Activated naive CD4-positive, alpha-beta T cell treated with anti-CD3 and anti-CD28 coated beads for 36 hours (primary cell): ENCODE measurements at regions of chr1 and their contacts with region 1.

Region 1: DNA sequence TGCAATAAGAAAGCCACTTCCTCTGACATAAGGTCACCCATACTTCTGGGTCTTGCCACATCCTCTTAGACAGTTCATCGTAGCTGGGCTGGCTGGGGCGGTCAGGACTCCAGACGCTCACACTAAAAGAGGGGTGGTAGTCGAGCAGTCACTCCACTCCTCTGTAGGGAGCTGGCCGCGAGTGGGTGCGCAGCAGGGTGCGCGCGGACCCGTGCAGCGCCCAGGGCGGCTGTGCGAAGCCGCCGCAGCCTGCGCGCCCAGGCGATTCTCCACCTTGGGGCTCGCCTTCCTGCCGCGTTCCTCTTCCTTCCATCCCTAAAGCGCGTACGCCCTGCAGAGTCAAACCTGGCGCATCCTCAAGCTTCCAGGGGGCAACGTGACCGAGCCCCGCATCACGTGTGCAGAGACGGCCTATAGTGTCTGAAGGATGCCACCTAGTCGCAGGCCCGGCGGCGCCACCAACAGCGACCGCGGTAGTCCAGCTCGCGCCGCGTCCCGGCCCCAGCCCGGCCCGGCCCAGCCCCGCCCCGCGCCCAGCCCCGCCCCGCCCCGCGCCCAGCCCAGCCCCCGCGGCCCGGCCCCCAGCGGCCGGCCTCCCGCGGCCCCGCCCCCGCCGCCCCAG is 360 bp upstream of the PRDX6 start:
- DNase-seq: peak; percentile 86
- H3K4me3 Mint-ChIP-seq: peak overlapping the region; percentile 91
- H3K27ac Mint-ChIP-seq: peak overlapping the region; percentile 93
- H3K4me1 Mint-ChIP-seq: peaks cover 58% of the 10 kb centered on the region
- H3K27me3 Mint-ChIP-seq: no peaks in the 10 kb centered on the region

Region 2: DNA sequence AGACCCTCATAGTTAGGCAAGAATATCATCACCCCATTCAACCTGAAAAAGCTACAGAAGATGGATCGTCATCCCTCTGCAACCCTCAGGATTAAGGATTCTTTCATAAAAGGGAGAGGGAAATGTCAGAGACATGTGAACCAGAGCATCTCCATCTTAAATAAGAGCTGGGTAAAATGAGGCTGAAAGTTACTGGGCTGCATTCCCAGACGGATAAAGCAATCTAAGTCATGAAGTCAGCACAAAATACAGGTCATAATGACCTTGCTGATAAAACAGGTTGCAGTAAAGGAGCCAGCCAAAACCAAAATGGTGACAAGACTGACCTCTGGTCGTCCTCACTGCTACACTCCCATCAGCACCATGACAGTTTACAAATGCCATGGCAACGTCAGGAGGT is 23.0 kb after region 1 on chr1:
- CTCF ChIA-PET with region 1: no interaction called
- intact Hi-C with region 1: no loop called
- DNase-seq: no peak
- H3K4me3 Mint-ChIP-seq: no peak overlapping the region
- H3K27ac Mint-ChIP-seq: no peak overlapping the region
- H3K4me1 Mint-ChIP-seq: no peaks in the 10 kb centered on the region
- H3K27me3 Mint-ChIP-seq: no peaks in the 10 kb centered on the region

Region 3: DNA sequence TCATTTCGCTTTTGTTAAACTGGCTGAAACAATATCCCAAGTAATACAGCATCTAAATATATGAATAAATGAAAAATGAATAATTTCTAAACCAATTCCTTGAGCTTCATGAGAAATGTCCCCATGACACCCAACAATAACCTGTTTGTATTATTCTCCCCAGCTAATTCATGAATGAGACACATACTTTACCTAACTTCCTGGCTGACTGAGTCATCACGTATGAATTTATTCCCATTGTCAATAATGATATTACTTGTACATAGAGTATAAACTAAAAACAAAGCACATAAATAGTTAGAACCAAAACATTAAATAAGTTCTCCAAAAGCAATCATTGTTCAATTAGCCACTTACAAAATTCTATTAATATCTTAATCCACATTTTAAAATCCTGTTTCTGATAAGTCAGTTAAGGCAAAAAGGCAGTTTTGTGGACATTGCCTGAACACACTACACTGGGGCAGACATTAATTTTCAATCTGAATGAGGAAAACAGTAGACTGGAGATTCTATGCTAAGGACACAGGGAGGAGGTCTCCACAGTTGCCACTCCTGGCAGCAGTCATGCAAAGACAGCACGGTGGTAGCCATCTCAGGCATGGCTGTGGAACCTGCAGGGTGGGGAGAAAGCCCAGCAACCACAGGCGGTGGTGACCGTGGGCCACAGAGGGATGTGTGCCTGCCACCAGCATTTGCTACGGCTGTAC is 77.9 kb after region 1 on chr1:
- CTCF ChIA-PET with region 1: no interaction called
- intact Hi-C with region 1: loop called (anchors 5 kb)
- DNase-seq: no peak
- H3K4me3 Mint-ChIP-seq: no peak overlapping the region
- H3K27ac Mint-ChIP-seq: no peak overlapping the region
- H3K4me1 Mint-ChIP-seq: peaks cover 47% of the 10 kb centered on the region
- H3K27me3 Mint-ChIP-seq: no peaks in the 10 kb centered on the region

Region 4: DNA sequence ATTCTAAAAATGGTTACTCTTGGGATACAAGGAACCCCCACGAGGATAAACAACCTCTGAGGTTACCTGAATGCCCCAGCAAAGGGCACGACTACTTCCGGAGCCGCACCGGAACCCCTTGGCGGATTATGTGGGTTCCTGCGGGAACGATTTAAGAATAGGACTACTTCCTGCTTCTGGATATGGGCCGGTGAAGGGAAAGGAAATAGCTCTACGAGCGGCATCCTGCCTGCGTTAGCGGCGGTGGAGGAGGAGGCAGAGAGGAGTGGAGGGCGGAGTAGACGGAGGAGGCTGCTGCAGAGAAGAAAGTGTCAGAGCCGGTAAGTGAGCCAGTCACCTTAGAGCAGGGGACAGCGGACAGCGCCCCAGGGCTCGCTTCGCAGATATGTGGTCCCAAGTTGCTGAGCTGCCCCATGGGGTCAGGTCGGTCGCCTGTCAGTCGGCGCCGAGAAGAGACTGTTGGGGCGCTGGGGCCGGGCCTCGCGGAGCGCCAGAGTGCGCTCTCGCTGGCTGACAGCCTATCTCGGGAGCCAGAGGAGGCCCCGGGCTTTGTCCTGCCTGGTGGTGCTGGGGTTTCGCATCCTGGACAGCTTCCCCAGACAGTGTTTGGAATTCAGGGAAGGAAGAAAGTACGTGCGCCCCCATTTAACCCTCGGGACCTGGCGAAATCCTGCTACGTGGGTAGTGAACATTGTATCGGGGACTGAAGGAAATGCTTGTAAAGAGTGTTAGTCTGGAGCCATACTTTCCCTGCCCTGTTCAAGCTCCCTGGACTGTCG is 238.2 kb after region 1 on chr1 and contains the start of gene KLHL20:
- CTCF ChIA-PET with region 1: no interaction called
- intact Hi-C with region 1: loop called (anchors 1 kb)
- DNase-seq: peak; percentile 91
- H3K4me3 Mint-ChIP-seq: peak within 1 kb of the TSS; percentile 97
- H3K27ac Mint-ChIP-seq: peak within 1 kb of the TSS; percentile 96
- H3K4me1 Mint-ChIP-seq: peaks cover 9% of the 10 kb centered on the region
- H3K27me3 Mint-ChIP-seq: peaks cover 15% of the 10 kb centered on the region
- total RNA-seq, gene KLHL20: 13.0 to 14.9 TPM

Region 5: DNA sequence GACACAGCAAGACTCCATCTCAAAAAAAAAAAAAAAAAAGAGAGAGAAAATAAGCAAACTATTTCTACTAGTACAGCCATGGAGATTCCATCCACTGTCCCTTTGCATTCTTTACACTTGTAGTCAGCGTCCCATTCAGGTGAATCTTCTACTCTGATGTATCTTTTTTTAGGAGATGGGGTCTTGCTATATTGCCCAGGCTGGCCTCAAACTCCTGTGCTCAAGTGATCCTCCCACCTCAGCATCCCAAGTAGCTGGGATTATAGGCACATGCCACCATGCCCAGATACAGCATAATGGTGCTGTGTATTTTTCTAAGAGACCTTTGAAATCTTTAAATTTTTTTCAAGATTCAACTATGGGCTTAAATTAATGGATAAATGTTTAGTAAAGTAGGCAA is 356.0 kb after region 1 on chr1:
- CTCF ChIA-PET with region 1: no interaction called
- intact Hi-C with region 1: no loop called
- DNase-seq: no peak
- H3K4me3 Mint-ChIP-seq: no peak overlapping the region
- H3K27ac Mint-ChIP-seq: no peak overlapping the region
- H3K4me1 Mint-ChIP-seq: peaks cover 9% of the 10 kb centered on the region
- H3K27me3 Mint-ChIP-seq: no peaks in the 10 kb centered on the region

Region 6: GRCh38 chr1:174789399-174789798 is 1312.6 kb after region 1 on chr1:
- CTCF ChIA-PET with region 1: no interaction called
- intact Hi-C with region 1: no loop called
- DNase-seq: no peak
- H3K4me3 Mint-ChIP-seq: no peak overlapping the region
- H3K27ac Mint-ChIP-seq: no peak overlapping the region
- H3K4me1 Mint-ChIP-seq: peaks cover 5% of the 10 kb centered on the region
- H3K27me3 Mint-ChIP-seq: no peaks in the 10 kb centered on the region